Mammary epithelial cell (primary cell): ENCODE measurements at regions of chr17 and their contacts with region 1.

Region 1: GRCh38 chr17:78865682-78866390 is 25.2 kb upstream of the USP36 start:
- DNase-seq: peak; percentile 54
- H3K4me3 ChIP-seq: no peak overlapping the region
- H3K27ac ChIP-seq: no peak overlapping the region
- H3K4me1 ChIP-seq: peaks cover 7% of the 10 kb centered on the region
- H3K27me3 ChIP-seq: no peaks in the 10 kb centered on the region
- CTCF ChIP-seq: peak; percentile 90 to 92

Region 2: DNA sequence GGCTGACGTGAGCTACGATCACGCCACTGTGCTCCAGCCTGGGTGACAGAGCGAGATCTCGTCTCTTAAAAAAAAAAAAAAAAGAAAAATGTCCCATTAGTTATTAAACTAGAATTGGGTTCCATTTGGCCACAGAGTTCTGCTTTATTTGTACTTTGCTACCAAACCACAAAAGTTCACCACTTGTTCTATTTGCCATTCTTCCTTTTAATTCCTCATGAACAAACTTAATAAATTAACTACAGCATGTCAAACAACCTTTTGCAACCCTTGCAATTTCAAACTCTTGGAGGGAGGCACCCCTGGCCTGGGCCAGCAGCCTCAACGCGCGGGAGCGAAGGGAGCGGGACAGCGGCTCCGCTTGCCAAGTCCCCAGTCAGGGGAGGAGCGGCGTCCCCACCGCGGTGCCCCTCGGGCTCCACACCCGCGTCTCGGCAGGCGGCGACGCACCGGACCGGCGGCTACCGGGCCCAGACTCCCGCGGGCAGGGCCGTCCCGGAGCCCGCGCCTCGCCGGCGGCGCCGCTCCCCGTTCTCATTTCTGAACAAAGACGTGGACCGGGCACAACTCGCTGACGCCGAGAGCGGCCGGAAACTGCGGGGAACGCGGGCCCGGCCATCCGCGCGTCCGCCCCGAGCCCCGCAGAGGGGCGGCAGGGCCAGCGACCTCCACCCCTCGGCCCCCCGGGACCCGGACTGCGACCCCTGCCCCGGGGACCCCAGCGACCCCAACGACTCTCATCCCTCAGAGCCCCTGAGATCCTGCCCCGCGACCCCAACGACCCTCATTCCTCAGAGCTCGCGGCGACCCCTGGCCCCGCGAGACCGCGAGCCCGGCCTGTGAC is 84.5 kb before region 1 on chr17:
- CTCF ChIA-PET with region 1: interaction called, 10 read pairs
- dilution Hi-C with region 1: no loop called
- in situ Hi-C with region 1: no loop called
- intact Hi-C with region 1: no loop called
- DNase-seq: peak; percentile 26
- H3K4me3 ChIP-seq: peak overlapping the region; percentile 84 to 93 (median 93)
- H3K27ac ChIP-seq: peak overlapping the region; percentile 71
- H3K4me1 ChIP-seq: peaks cover 20% of the 10 kb centered on the region
- H3K27me3 ChIP-seq: peaks cover 1% of the 10 kb centered on the region
- CTCF ChIP-seq: no peak

Region 3: DNA sequence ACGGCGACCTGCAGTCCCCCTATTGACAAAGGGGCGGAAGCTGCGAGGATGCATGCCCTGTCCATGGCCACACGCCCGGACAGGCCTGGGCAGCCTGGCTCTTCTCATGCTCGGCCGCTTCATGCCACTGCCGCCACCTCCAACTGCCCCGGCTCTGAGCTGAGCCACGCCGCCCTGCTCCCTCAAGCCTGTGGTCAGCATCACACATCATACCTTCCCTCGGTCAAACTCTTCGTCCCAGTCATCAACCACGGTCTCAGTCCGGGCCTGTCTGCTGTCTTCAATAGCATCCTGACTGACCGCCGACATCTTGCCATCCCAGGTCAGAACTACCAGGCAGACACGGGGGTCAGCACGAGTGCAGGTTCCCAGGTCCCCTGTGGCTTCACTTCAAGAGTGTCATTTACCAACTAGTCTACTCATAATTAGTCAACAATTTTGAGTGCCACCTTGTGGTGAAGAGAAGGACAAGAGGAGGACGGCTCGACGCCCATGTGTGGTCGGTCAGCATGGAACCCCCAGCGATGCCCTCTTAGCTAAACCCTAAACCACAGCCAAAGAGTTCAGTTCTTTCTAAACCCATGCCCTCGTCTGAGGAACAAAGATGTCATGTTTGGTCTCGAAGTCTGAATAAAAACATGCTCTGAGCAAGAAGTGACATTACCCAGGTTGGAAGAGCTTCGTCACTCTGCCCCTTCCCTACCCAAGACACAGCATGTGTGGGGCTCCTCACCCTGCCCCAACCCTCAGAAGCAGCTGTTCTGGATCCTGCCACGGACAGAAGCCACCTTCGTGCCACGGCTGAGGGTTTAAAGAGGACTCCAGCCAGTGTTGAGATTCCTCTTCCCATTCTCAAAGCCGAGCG is 66.9 kb before region 1 on chr17:
- CTCF ChIA-PET with region 1: no interaction called
- dilution Hi-C with region 1: no loop called
- in situ Hi-C with region 1: no loop called
- intact Hi-C with region 1: no loop called
- DNase-seq: peak; percentile 37
- H3K4me3 ChIP-seq: no peak overlapping the region
- H3K27ac ChIP-seq: no peak overlapping the region
- H3K4me1 ChIP-seq: peaks cover 41% of the 10 kb centered on the region
- H3K27me3 ChIP-seq: no peaks in the 10 kb centered on the region
- CTCF ChIP-seq: peak; percentile 12 to 48

Region 4: DNA sequence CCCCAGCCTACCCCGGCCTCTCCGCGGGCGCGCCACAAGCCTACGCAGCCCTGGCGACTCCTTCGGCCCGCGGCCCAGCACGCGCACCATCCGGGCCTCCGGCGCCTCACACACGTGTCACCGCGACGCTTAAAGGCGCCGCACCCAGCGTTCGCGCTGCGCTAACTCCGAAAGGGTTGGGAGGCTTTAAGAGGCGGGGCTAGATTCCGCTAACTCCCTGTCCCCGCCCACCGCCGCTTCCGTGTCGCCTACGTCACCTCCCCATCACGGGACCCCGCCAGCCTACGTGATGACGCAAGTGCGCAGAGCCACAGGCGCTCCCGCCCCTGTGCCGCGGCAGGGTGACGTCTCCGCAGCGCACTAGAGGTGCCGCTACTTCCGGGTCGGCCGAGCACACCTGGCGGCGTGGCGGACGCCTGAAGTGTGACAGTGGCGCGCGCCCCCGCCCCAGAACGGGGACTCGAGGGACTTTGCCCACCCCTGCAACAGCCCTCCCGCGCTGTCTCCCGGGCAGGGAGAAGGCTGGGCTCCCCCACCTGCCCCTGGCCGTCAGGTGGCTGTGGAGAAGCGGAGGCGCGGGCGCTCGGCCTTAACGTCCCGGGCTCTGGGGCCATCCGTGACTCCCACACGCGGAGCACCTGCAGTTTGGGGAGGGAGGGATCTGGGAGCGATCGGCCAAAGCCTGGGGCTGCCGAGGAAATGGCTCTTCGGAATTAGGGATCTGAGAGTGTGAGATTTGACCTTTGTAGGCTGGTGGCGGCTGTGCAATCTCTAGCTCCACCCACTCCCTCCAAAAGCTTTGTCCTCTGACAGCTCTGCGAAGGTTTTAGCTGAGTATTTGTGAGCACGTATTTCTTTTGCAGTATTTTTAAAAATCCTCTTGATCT is 24.9 kb before region 1 on chr17 and contains the start of gene USP36:
- CTCF ChIA-PET with region 1: no interaction called
- dilution Hi-C with region 1: no loop called
- in situ Hi-C with region 1: no loop called
- intact Hi-C with region 1: loop called (anchors 2 kb)
- DNase-seq: peak; percentile 99
- H3K4me3 ChIP-seq: peak within 1 kb of the TSS; percentile 76 to 88 (median 79)
- H3K27ac ChIP-seq: peak within 1 kb of the TSS; percentile 89
- H3K4me1 ChIP-seq: peaks cover 15% of the 10 kb centered on the region
- H3K27me3 ChIP-seq: no peaks in the 10 kb centered on the region
- CTCF ChIP-seq: peak in 1 of 2 donors; percentile 11
- total RNA-seq, gene USP36: 35.7 to 80.8 TPM

Region 5: GRCh38 chr17:78883164-78884122 is 17.6 kb after region 1 on chr17:
- CTCF ChIA-PET with region 1: interaction called, 4 read pairs
- dilution Hi-C with region 1: no loop called
- in situ Hi-C with region 1: no loop called
- intact Hi-C with region 1: loop called (anchors 1 kb)
- DNase-seq: peak; percentile 80
- H3K4me3 ChIP-seq: peak overlapping the region in 2 of 3 experiments; percentile 12 to 24
- H3K27ac ChIP-seq: peak overlapping the region; percentile 73
- H3K4me1 ChIP-seq: peaks cover 26% of the 10 kb centered on the region
- H3K27me3 ChIP-seq: no peaks in the 10 kb centered on the region
- CTCF ChIP-seq: peak in 1 of 2 donors; percentile 14

Region 6: GRCh38 chr17:78925234-78925633 is 59.4 kb after region 1 on chr17 and contains the start of gene TIMP2:
- CTCF ChIA-PET with region 1: interaction called, 4 read pairs
- dilution Hi-C with region 1: no loop called
- in situ Hi-C with region 1: no loop called
- intact Hi-C with region 1: loop called (anchors 1 kb)
- DNase-seq: no peak
- H3K4me3 ChIP-seq: peak within 1 kb of the TSS; percentile 22 to 49 (median 40)
- H3K27ac ChIP-seq: no peak within 1 kb of the TSS
- H3K4me1 ChIP-seq: peaks cover 9% of the 10 kb centered on the region
- H3K27me3 ChIP-seq: peaks cover 1% of the 10 kb centered on the region
- CTCF ChIP-seq: no peak
- total RNA-seq, gene TIMP2: 20.7 to 31.2 TPM

Region 7: DNA sequence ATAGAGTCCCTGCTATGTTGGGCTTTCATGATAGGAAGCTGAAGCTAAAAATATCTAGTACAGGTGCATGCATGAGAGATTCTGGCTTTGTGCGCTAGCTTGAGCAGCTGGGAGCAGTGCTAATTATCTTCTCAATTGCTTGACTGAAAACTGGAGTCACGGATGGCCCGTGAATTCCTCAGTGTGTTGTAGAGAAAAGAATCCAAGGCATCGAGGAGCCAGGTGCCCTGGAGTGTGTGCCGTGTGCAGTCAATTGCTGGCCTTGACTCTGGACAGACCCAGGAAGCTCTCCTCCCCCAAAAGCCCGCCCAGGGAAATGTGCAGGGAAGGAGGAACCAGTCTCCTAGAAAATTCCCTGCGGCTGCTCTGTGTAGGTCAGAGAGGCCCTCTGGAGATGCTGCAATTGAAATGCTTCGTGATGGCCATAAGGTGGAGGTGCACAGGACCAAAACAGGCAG is 99.7 kb after region 1 on chr17:
- CTCF ChIA-PET with region 1: no interaction called
- dilution Hi-C with region 1: no loop called
- in situ Hi-C with region 1: loop called (anchors 5 kb)
- intact Hi-C with region 1: no loop called
- DNase-seq: no peak
- H3K4me3 ChIP-seq: no peak overlapping the region
- H3K27ac ChIP-seq: no peak overlapping the region
- H3K4me1 ChIP-seq: peaks cover 7% of the 10 kb centered on the region
- H3K27me3 ChIP-seq: no peaks in the 10 kb centered on the region
- CTCF ChIP-seq: no peak

Region 8: GRCh38 chr17:78970834-78971773 is 105.3 kb after region 1 on chr17:
- CTCF ChIA-PET with region 1: interaction called, 8 read pairs
- dilution Hi-C with region 1: no loop called
- in situ Hi-C with region 1: loop called (anchors 5 kb)
- intact Hi-C with region 1: loop called (anchors 1 kb)
- DNase-seq: peak; percentile 47
- H3K4me3 ChIP-seq: no peak overlapping the region
- H3K27ac ChIP-seq: no peak overlapping the region
- H3K4me1 ChIP-seq: peaks cover 32% of the 10 kb centered on the region
- H3K27me3 ChIP-seq: no peaks in the 10 kb centered on the region
- CTCF ChIP-seq: peak; percentile 84 to 88